Ascending aorta (tissue), 2 donors: ENCODE measurements at regions of chr17 and their contacts with region 1.

Region 1: GRCh38 chr17:56977673-56978395 is at the start of gene SCPEP1:
- DNase-seq: peak; percentile 64 to 93
- H3K4me3 ChIP-seq: peak within 1 kb of the TSS; percentile 60 to 89
- H3K27ac ChIP-seq: peak within 1 kb of the TSS; percentile 46 to 47
- H3K4me1 ChIP-seq: peaks cover 0 to 10% of the 10 kb centered on the region in 2 donors
- H3K27me3 ChIP-seq: no peaks in the 10 kb centered on the region
- CTCF ChIP-seq: no peak
- total RNA-seq, gene SCPEP1: 76.2 TPM

Region 2: DNA sequence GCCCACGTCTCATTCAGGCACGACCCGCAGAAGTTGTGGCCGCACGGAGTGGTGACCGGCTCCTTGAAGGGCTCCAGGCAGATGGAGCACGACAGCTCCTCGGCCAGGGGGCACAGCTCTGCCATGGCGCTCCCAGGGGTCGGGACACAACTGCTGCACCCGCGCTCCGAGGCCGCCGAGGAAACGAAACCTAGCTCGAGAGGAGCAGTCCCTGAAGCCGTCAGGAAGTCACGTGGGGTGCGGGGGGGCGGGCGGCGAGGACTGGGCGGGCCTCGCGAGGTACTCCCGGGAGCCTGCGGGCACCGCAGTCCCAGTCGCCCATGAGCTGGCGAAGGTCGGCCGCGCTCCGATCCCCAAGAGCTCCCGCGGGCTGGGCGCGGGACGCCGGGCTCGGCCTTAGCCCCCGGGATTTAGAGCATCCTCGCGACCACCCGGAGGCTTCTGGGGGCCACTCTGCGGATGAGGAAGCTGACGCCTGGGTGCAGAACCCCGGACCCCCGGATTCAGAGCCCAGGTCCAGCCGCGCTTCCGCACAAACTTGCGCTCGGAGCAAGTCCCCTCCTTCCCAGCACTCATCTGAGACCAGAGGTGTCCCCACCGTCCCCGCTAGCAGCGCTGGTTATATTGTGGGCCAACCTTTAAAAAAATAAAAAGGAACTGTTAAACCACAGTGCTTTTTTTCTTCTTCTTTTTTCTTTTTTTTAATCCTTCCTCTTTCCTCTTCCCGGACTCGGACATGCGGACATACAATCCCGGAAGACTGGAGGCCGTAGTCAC is 63.8 kb before region 1 on chr17 and contains the start of gene TRIM25:
- intact Hi-C with region 1: loop called (anchors 5 kb)
- DNase-seq: peak; percentile 75 to 96
- H3K4me3 ChIP-seq: peak within 1 kb of the TSS; percentile 91 to 92
- H3K27ac ChIP-seq: peak within 1 kb of the TSS; percentile 87
- H3K4me1 ChIP-seq: peaks cover 0 to 17% of the 10 kb centered on the region in 2 donors
- H3K27me3 ChIP-seq: no peaks in the 10 kb centered on the region
- CTCF ChIP-seq: no peak
- total RNA-seq, gene TRIM25: 65.3 TPM

Region 3: GRCh38 chr17:56960596-56961538 is 17.0 kb before region 1 on chr17 and contains the start of gene COIL:
- intact Hi-C with region 1: loop called (anchors 2 kb)
- DNase-seq: peak; percentile 39 to 95
- H3K4me3 ChIP-seq: peak within 1 kb of the TSS; percentile 84 to 89
- H3K27ac ChIP-seq: peak within 1 kb of the TSS; percentile 84 to 89
- H3K4me1 ChIP-seq: peaks cover 7 to 14% of the 10 kb centered on the region in 2 donors
- H3K27me3 ChIP-seq: no peaks in the 10 kb centered on the region
- CTCF ChIP-seq: peak; percentile 94 to 100 (median 98)
- total RNA-seq, gene COIL: 4.8 TPM

Region 4: DNA sequence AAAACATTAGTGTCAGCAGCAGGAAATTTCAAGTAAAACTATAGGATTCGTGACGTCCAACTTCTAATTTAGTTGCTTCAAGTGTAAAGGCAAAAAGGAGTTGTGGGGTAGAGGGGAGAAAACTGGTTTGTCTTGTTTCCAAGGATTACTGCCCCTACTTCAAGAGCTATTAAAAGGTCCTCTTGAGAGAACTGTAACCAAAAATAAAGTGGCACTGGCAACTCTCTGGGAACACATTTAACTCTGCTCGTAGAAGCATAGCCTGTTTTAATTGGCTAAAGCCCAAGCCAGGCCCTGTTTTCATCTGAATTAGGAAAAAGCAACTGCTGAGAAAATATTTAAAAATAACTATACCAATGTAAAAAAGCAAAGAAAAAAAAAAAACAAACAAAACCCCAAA is 55.5 kb after region 1 on chr17:
- intact Hi-C with region 1: loop called (anchors 1 kb)
- DNase-seq: peak in 1 of 2 donors; percentile 86
- H3K4me3 ChIP-seq: no peak overlapping the region
- H3K27ac ChIP-seq: peak overlapping the region; percentile 85 to 92
- H3K4me1 ChIP-seq: peaks cover 8 to 43% of the 10 kb centered on the region in 2 donors
- H3K27me3 ChIP-seq: no peaks in the 10 kb centered on the region
- CTCF ChIP-seq: no peak

Region 5: DNA sequence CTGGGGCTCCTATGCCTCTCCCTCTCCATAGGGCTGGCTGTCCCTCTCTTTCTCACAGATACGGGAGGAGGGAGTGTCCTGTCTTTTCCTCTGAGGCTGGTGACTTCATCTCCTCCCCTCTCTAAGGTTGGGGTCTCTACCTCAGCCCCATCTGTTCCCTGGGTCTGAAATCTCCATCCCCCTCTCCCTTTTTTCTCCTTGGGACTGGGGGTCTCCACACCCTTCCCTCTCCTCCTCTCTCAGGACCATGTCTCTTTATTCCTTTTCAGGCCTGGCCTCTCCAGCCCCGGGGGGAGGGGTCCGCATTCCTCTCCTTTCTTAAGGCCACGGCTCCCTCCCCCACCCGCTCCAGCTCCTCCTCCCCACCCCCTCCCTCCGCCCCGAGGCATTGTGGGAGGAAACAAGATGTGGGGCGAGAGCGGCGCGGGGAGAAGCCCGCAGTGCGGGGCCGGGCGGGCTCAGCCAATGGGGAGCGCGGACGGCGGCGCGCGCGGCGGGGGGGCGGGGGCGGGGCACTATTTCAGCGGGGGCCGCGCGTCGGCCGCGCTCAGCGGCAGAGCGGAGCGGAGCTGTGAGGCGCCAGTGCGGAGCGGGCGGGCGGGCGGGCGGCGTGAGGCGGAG is 1105.1 kb after region 1 on chr17 and contains the start of gene DYNLL2:
- intact Hi-C with region 1: loop called (anchors 10 kb)
- DNase-seq: peak; percentile 65 to 96
- H3K4me3 ChIP-seq: peak within 1 kb of the TSS; percentile 66 to 76
- H3K27ac ChIP-seq: peak within 1 kb of the TSS; percentile 90 to 92
- H3K4me1 ChIP-seq: peaks cover 6 to 27% of the 10 kb centered on the region in 2 donors
- H3K27me3 ChIP-seq: no peaks in the 10 kb centered on the region
- CTCF ChIP-seq: no peak
- total RNA-seq, gene DYNLL2: 15.3 TPM